ENCODE measurements at regions of chr2 and their contacts with region 1.

Region 1: GRCh38 chr2:119407430-119408220 is 24.0 kb upstream of the TMEM37 start:
- DNase-seq: no peak

Region 2: GRCh38 chr2:119426801-119427395 is 19.3 kb after region 1 on chr2:
- intact Hi-C with region 1: no loop called
- DNase-seq: no peak

Region 3: GRCh38 chr2:119438128-119438656 is 30.6 kb after region 1 on chr2:
- intact Hi-C with region 1: loop called in 1 of 2 experiments (anchors 1 kb)
- DNase-seq: no peak

Region 4: DNA sequence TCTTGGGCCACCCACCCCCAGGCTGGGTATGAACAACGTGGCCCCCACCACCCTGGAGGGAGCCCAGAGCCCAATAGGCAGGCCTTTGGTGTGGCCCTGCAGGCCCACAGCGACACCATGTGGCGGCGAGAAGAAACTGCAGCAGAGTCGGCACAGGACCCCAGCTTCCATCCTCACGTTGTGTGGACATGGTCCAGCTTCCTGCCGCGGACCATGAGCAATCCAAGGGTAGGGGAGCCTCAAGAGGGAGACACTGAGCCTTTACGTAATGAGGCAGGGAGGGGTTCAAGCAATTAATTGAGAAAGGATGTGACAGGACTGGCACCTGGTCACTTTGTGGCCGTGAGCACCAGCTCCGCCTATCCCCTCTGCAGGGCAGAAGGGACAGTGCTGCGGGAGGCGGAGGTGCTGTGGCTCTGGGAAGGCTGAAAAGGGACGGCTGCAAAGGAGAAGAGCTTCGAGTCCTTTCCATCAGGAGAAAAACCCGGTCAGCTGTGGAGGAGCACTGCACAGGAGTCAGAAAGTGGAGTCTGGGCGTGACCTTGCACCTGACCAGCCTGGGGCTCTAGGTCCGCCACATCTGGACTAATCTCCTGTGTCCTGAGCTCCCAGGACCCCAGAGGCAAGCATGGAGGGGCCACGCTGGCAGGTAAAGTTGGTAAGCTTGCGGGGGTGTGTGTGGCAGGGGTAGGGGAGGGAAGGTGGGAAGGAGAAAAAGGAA is 68.8 kb after region 1 on chr2:
- intact Hi-C with region 1: loop called (anchors 2 to 5 kb)
- DNase-seq: no peak